GM13977 (cell line): ENCODE measurements at regions of chr9 and their contacts with region 1.

Region 1: DNA sequence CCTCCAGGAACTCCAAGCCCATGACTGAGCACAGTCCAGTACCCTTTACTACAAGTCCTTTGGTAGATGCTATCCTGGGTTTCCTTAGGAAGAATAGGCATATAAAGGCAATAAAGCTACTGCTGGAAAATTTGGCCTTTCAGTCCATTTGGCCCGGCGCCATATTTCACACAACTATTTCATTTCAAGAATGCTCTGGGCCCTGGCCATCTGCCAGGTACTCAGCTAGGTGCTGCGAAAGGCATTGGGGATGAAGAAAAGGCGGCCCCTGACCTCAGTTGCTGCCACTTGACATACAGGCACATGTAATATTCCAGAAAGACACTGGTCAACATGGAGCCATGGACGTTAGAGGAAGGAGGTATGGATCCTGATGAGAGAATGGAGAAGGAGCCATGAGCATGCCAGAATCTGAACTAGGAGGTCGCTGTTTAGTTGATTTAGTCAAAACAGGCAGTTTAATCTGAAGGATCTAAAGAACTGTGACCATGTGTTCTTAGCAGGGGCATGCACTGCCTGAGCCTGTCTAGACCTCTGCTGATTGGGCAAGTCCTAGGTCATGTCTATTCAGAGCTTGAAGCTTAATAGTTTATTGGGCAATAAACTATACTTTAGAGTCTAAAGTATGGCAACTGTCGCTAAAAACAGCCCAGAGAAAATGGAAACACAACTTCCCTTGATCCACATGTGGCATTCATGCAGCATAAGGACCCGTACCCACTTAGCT is 149.3 kb downstream of the MELK start:
- DNase-seq: no peak
- CTCF ChIP-seq: no peak

Region 2: GRCh38 chr9:36174731-36175130 is 547.3 kb before region 1 on chr9:
- in situ Hi-C with region 1: no loop called
- DNase-seq: no peak
- CTCF ChIP-seq: no peak

Region 3: DNA sequence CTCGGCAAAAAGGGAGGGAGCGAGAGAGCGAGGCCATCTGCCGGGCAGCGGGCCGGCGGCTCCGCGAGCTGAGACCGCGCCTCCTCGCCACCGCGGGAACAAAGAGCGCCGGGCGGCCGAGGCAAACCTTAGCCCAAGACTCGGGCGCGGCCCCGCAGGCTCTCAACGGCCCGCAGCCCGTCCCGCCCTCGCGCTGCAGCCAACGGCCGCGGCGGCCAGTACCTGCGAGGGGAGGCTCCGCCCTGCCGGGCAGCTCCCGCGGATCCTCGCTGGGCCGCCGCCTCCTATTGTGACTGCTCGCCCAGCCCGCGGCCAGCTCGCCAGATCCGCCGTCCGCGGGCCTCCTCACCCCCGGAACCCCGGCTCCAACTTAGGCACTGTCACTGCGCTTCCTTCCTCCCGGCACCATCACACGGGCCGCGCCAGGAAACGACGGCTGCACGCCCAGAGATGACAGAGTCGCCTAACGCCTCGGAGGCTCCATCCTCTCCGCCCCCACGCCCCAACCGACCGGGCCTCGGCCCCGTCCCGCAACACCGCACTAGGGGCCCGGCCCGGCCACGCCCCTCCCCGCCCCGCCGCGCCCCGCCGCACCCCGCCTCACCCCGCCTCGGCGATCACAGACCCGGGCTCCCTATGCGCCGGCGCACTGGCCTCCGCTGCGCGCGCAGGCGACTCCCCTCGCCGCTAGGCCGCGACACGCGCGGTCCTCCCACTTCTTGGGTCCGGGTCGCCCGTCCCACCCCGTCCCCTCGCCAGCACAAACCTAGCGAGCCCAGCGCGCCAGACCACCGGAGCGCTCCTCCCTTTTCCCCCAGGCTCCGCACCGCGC is 321.5 kb before region 1 on chr9:
- in situ Hi-C with region 1: loop called (anchors 25 kb)
- DNase-seq: peak; percentile 97
- CTCF ChIP-seq: peak; percentile 38